Endothelial cell of umbilical vein (primary cell): ENCODE measurements at regions of chr9 and their contacts with region 1.

Region 1: DNA sequence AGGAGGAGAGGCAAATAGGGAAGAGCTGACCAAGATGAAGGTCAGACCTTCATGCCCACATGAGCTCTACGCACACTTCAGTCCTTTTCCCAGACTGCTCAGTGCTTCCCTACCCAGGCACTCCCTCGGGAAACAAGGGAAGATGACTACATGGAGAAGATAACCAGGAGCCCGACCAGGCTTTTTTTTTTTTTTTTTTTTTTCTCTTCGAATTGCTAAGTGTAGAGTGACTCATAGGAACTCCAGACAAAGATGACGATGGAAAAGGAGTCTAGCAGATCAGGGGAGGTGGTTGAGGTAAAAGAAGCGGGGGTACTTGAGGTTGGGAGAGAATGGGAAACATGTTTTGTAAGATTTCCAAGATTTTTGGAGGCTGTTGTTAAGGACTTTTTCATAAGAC is 526.1 kb downstream of the BNC2 start:
- DNase-seq: peak; percentile 40
- H3K4me3 ChIP-seq: no peak overlapping the region
- H3K27ac ChIP-seq: no peak overlapping the region
- H3K4me1 ChIP-seq: peaks cover 3% of the 10 kb centered on the region
- H3K27me3 ChIP-seq: no peaks in the 10 kb centered on the region
- CTCF ChIP-seq: no peak
- POLR2A ChIP-seq: no peak

Region 2: DNA sequence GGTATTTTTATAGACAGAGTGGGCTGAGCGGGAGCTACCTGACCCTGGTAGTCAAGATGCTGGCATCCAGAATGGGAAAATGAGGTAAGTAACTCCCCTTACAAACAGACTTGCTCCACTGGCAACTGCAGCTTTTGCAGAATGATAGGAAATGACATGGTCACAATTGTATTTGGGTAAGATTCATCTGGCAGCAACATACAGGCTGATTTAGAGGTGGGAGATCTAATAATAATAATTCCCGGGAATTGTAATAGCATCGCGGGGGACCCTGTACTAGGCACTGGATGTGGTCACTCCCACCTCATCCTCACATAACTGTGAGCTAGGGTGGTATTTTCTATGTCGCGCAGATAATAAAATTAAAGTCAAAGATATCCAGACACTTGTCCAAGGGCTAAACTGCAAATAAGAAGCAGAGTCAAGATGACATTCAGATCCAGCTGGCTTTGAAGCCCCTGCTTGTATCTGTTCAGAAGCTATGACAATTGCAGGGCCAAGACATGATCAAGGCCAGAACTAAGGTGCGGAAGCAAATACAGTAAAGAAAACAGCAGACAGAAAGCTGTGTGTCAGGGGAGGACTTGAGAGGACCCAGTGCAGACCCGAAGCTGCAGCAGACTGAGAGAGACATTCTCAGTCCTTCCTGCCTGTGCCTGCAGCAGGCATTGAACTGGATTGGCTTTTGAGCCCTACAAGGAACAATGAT is 18.9 kb after region 1 on chr9:
- CTCF ChIA-PET with region 1: interaction called, 3 read pairs
- POLR2A ChIA-PET with region 1: no interaction called
- dilution Hi-C with region 1: no loop called
- intact Hi-C with region 1: loop called (anchors 2 kb)
- DNase-seq: peak; percentile 60
- H3K4me3 ChIP-seq: no peak overlapping the region
- H3K27ac ChIP-seq: no peak overlapping the region
- H3K4me1 ChIP-seq: peaks cover 34% of the 10 kb centered on the region
- H3K27me3 ChIP-seq: no peaks in the 10 kb centered on the region
- CTCF ChIP-seq: no peak
- POLR2A ChIP-seq: no peak